WTC11 (cell line): ENCODE measurements at regions of chr17 and their contacts with region 1.

Region 1: GRCh38 chr17:38982858-38983746 is 15.9 kb upstream of the FBXO47 start:
- DNase-seq: peak; percentile 47
- ATAC-seq: peak; percentile 67
- H3K4me3 Mint-ChIP-seq: no peak overlapping the region
- H3K27ac Mint-ChIP-seq: no peak overlapping the region
- H3K4me1 Mint-ChIP-seq: no peaks in the 10 kb centered on the region
- H3K27me3 Mint-ChIP-seq: no peaks in the 10 kb centered on the region
- CTCF ChIP-seq: peak; percentile 35; the same call in 1 of the 2 replicates

Region 2: GRCh38 chr17:39014044-39014794 is 31.1 kb after region 1 on chr17:
- CTCF ChIA-PET with region 1: interaction called, 29 read pairs
- POLR2A ChIA-PET with region 1: no interaction called
- DNase-seq: no peak
- ATAC-seq: no peak
- H3K4me3 Mint-ChIP-seq: no peak overlapping the region
- H3K27ac Mint-ChIP-seq: no peak overlapping the region; the same call in 1 of the 2 replicates
- H3K4me1 Mint-ChIP-seq: peaks cover 35% of the 10 kb centered on the region
- H3K27me3 Mint-ChIP-seq: no peaks in the 10 kb centered on the region; the same call in 1 of the 2 replicates
- CTCF ChIP-seq: no peak

Region 3: DNA sequence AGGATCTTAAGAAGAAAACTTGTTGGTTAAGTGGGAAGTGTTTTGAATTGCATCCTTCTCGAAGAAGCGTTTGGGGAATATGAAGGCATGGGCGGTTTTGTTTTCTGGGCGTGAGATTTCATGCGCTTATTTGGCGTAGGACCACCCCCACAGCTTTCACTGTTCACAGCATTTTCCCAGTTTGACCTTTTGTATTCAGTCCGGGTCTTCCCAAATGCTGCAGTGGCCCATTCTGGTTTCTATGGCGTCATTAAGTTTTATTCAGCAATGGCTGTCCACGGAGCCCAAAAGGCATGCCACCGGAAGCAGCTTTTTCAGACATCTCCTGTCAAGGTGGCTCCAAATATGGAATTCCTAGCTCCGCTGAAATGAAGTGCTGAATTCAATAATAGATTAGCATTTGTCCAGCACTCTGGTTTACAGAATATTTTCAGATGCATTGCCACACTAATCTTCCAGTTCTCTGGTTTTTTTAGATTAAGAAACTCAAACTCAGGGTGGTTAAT is 74.7 kb after region 1 on chr17:
- CTCF ChIA-PET with region 1: interaction called, 18 read pairs
- POLR2A ChIA-PET with region 1: interaction called, 3 read pairs
- DNase-seq: no peak
- ATAC-seq: no peak
- H3K4me3 Mint-ChIP-seq: peak overlapping the region; percentile 82
- H3K27ac Mint-ChIP-seq: no peak overlapping the region
- H3K4me1 Mint-ChIP-seq: peaks cover 15% of the 10 kb centered on the region
- H3K27me3 Mint-ChIP-seq: no peaks in the 10 kb centered on the region
- CTCF ChIP-seq: no peak

Region 4: DNA sequence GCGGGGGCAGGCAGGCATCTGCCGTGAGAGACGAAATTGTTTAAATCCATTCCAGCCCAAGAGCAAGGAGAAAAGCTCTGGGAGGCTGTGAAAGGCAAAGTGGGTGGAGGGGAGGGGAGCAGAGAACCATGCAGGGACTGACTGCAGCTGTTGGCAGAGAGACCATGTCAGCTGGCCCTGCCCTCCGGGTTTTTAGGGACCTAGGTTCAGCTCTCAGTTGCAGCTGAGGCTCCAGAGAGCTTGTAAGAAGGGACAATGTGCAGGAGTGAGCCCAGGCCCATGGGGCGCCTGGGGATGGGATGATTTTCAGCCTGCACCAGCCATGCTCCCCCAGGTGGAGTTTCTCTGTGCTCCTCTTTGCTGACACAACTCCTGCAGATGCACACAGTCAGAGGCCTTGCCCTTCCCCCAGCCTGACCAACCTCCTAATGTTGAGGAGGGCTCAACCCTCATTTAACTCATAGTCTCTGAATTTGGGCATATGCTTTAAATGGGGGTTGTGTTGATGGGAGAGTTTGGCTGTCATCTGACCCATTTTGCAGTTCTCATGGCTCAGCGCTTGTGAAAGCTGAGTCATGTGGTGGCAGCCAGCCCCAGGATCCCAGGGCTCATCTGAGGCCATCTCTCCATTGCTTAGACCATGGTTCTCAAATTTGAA is 97.4 kb after region 1 on chr17:
- CTCF ChIA-PET with region 1: interaction called, 14 read pairs
- POLR2A ChIA-PET with region 1: no interaction called
- DNase-seq: no peak
- ATAC-seq: peak; percentile 65
- H3K4me3 Mint-ChIP-seq: no peak overlapping the region
- H3K27ac Mint-ChIP-seq: no peak overlapping the region
- H3K4me1 Mint-ChIP-seq: peaks cover 17% of the 10 kb centered on the region
- H3K27me3 Mint-ChIP-seq: no peaks in the 10 kb centered on the region; the same call in 1 of the 2 replicates
- CTCF ChIP-seq: no peak

Region 5: GRCh38 chr17:39144416-39144840 is 161.3 kb after region 1 on chr17:
- CTCF ChIA-PET with region 1: interaction called, 21 read pairs
- POLR2A ChIA-PET with region 1: no interaction called
- DNase-seq: no peak
- ATAC-seq: no peak
- H3K4me3 Mint-ChIP-seq: no peak overlapping the region
- H3K27ac Mint-ChIP-seq: no peak overlapping the region
- H3K4me1 Mint-ChIP-seq: peaks cover 4% of the 10 kb centered on the region; the same call in 1 of the 2 replicates
- H3K27me3 Mint-ChIP-seq: peaks cover 7% of the 10 kb centered on the region
- CTCF ChIP-seq: no peak

Region 6: GRCh38 chr17:39174907-39175694 is 192.0 kb after region 1 on chr17:
- CTCF ChIA-PET with region 1: interaction called, 84 read pairs
- POLR2A ChIA-PET with region 1: no interaction called
- DNase-seq: peak; percentile 92
- ATAC-seq: peak; percentile 53
- H3K4me3 Mint-ChIP-seq: peak overlapping the region; percentile 39
- H3K27ac Mint-ChIP-seq: peak overlapping the region; percentile 32; the same call in 1 of the 2 replicates
- H3K4me1 Mint-ChIP-seq: peaks cover 41% of the 10 kb centered on the region
- H3K27me3 Mint-ChIP-seq: peaks cover 12% of the 10 kb centered on the region
- CTCF ChIP-seq: peak; percentile 98